ENCODE measurements at regions of chr6 and their contacts with region 1.

Region 1: DNA sequence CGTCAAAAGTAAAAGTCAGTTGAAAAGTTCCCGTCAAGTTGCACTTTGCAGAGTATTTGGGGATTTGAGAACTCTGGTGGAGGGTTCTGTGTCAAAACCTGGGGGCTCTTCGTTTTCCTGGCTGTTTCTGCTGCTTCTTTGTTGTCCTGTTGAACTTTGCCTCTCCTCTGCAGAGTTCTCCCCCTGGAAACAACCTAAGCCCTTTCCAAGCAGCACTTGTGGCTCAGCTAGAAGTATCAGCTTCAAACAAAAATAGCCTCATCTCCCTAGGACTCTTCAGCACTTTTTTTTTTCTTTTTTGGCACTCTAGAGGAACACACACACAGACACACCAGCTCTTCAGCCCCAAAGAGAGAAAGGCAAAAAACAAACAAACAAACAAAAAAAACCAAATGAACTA is at the start of gene TRDN:
- DNase-seq: no peak
- ATAC-seq: peak; percentile 91
- total RNA-seq, gene TRDN: 394 TPM

Region 2: GRCh38 chr6:123439371-123439770 is 197.4 kb before region 1 on chr6:
- intact Hi-C with region 1: loop called (anchors 5 kb)
- DNase-seq: no peak
- ATAC-seq: peak; percentile 81

Region 3: GRCh38 chr6:123519191-123519510 is 117.6 kb before region 1 on chr6:
- intact Hi-C with region 1: loop called (anchors 1 kb)
- DNase-seq: peak; percentile 88
- ATAC-seq: peak; percentile 93

Measured in Right ventricle myocardium inferior (tissue), 1 donor.